ENCODE measurements at regions of chr3 and their contacts with region 1.

Region 1: GRCh38 chr3:125519678-125520589 is at the start of gene SNX4:
- DNase-seq: peak; percentile 79
- H3K4me3 Mint-ChIP-seq: peak within 1 kb of the TSS; percentile 89
- H3K27ac Mint-ChIP-seq: peak within 1 kb of the TSS; percentile 80
- H3K4me1 Mint-ChIP-seq: peaks cover 22% of the 10 kb centered on the region
- H3K27me3 Mint-ChIP-seq: no peaks in the 10 kb centered on the region
- total RNA-seq, gene SNX4: 46.3 and 50.7 TPM in 2 replicates

Region 2: DNA sequence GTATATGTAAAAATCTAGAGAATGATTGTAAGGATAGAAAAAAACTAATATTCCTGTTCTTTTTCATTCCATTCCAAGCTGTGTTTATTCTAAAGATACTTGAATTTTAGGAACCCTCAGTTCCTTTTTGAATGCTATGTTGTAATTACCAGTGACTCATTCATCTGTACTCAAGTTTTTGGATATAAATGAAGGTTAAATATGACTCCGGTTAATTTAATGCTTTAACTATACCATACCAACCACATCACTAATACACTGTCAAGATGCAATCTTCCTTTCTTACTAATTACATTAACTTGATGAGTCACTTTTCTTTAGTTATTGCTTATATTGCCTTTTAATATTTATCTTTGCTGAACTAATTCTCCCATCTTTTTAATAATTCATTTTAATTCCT is 76.0 kb before region 1 on chr3:
- intact Hi-C with region 1: no loop called
- DNase-seq: no peak
- H3K4me3 Mint-ChIP-seq: no peak overlapping the region
- H3K27ac Mint-ChIP-seq: no peak overlapping the region
- H3K4me1 Mint-ChIP-seq: no peaks in the 10 kb centered on the region
- H3K27me3 Mint-ChIP-seq: peaks cover 2% of the 10 kb centered on the region

Region 3: DNA sequence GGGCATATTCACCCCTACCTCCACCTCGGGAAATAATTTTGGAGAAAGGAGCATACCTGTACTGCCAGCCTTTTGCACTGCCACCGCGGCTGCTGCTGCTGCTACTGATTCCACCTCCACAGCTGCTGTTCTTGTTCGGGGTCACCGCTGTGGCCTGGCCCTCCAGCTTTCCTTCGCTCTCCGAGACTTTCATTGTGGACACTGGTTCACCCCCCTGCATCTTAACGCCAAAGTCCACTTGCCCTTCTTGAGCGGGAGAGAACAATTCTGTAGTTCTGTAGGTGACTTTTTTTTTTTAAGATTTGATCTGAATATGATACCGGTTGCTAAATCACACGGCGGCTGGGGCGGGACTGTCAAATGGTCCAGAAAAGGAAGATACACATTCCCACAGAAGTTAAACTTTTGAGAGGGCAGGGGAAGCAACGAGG is 74.7 kb after region 1 on chr3:
- intact Hi-C with region 1: loop called (anchors 2 kb)
- DNase-seq: peak; percentile 18
- H3K4me3 Mint-ChIP-seq: peak overlapping the region; percentile 98
- H3K27ac Mint-ChIP-seq: peak overlapping the region; percentile 90
- H3K4me1 Mint-ChIP-seq: peaks cover 30% of the 10 kb centered on the region
- H3K27me3 Mint-ChIP-seq: no peaks in the 10 kb centered on the region